ENCODE measurements at regions of chr9 and their contacts with region 1.

Region 1: GRCh38 chr9:124415102-124415851 is at the start of gene PSMB7:
- DNase-seq: peak; percentile 98
- H3K4me3 Mint-ChIP-seq: peak within 1 kb of the TSS; percentile 100
- H3K27ac Mint-ChIP-seq: peak within 1 kb of the TSS; percentile 90
- H3K4me1 Mint-ChIP-seq: peaks cover 34% of the 10 kb centered on the region
- H3K27me3 Mint-ChIP-seq: no peaks in the 10 kb centered on the region
- total RNA-seq, gene PSMB7: 156 TPM

Region 2: GRCh38 chr9:124180557-124180956 is 234.7 kb before region 1 on chr9:
- CTCF ChIA-PET with region 1: no interaction called
- POLR2A ChIA-PET with region 1: no interaction called
- intact Hi-C with region 1: no loop called
- DNase-seq: no peak
- H3K4me3 Mint-ChIP-seq: no peak overlapping the region
- H3K27ac Mint-ChIP-seq: no peak overlapping the region
- H3K4me1 Mint-ChIP-seq: no peaks in the 10 kb centered on the region
- H3K27me3 Mint-ChIP-seq: no peaks in the 10 kb centered on the region

Region 3: DNA sequence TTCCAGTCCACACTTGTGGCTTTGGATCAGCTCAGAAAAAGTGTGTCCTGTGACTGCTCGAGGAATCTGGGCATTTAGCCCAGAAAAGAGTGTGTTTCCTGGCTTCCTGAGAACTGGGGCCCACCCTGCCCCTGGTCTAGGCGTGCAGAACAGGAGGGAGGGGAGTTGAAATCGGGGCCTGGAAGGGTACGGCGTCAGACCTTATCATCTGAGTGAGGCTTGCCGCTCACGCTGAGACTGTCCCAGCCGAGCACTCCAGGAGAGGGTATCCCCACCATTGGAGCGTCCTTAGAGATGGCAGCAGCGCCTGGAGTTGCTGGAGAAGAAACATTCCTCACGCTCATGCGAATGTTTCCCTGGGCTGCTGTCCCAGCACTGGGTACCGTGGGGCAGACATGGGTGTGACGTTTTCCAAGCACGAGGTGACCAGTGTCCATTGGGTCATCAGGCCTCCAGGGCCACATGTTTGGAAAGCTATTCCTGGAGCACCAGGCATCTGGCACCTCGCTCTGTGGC is 135.0 kb before region 1 on chr9:
- CTCF ChIA-PET with region 1: no interaction called
- POLR2A ChIA-PET with region 1: no interaction called
- intact Hi-C with region 1: no loop called
- DNase-seq: no peak
- H3K4me3 Mint-ChIP-seq: no peak overlapping the region
- H3K27ac Mint-ChIP-seq: no peak overlapping the region
- H3K4me1 Mint-ChIP-seq: peaks cover 1% of the 10 kb centered on the region
- H3K27me3 Mint-ChIP-seq: no peaks in the 10 kb centered on the region

Region 4: GRCh38 chr9:124381170-124381945 is 33.9 kb before region 1 on chr9:
- CTCF ChIA-PET with region 1: no interaction called
- POLR2A ChIA-PET with region 1: no interaction called
- intact Hi-C with region 1: no loop called
- DNase-seq: no peak
- H3K4me3 Mint-ChIP-seq: no peak overlapping the region
- H3K27ac Mint-ChIP-seq: no peak overlapping the region
- H3K4me1 Mint-ChIP-seq: peaks cover 20% of the 10 kb centered on the region
- H3K27me3 Mint-ChIP-seq: no peaks in the 10 kb centered on the region

Region 5: GRCh38 chr9:124399323-124399967 is 15.8 kb before region 1 on chr9:
- CTCF ChIA-PET with region 1: interaction called, 14 read pairs
- POLR2A ChIA-PET with region 1: no interaction called
- intact Hi-C with region 1: no loop called
- DNase-seq: no peak
- H3K4me3 Mint-ChIP-seq: no peak overlapping the region
- H3K27ac Mint-ChIP-seq: no peak overlapping the region
- H3K4me1 Mint-ChIP-seq: peaks cover 24% of the 10 kb centered on the region
- H3K27me3 Mint-ChIP-seq: no peaks in the 10 kb centered on the region

Region 6: DNA sequence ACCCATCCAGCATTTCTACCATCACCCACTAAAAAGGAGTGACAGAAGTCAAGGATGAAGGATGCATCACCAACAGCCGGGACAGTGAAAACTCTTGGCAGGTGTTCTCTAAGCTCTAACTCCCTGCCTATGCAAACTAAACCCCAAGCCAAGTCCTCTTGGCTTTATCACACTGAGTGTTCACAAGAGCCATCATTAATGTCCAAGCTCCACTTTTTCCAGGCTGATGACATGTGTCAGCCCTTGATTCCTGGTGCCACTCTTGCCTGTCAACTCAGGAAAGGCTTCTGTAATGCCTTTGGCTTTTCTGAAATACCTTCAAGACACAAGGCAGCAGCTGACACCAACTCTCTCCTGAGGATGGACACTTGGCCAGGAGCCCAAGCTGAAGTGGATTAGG is 268.9 kb after region 1 on chr9:
- CTCF ChIA-PET with region 1: no interaction called
- POLR2A ChIA-PET with region 1: no interaction called
- intact Hi-C with region 1: no loop called
- DNase-seq: no peak
- H3K4me3 Mint-ChIP-seq: no peak overlapping the region
- H3K27ac Mint-ChIP-seq: no peak overlapping the region
- H3K4me1 Mint-ChIP-seq: no peaks in the 10 kb centered on the region
- H3K27me3 Mint-ChIP-seq: peaks cover 10% of the 10 kb centered on the region

Measured in activated CD4-positive, alpha-beta memory T cell treated with anti-CD3 and anti-CD28 coated beads for 36 hours (primary cell).